GM12878 (cell line): ENCODE measurements at regions of chr7 and their contacts with region 1.

Region 1: GRCh38 chr7:106041140-106041717 is 70.9 kb downstream of the SYPL1 start:
- DNase-seq: no peak
- ATAC-seq: peak; percentile 82
- H3K4me3 ChIP-seq: no peak overlapping the region
- H3K27ac ChIP-seq: no peak overlapping the region
- H3K4me1 ChIP-seq: no peaks in the 10 kb centered on the region
- H3K27me3 ChIP-seq: peaks cover 0 to 6% of the 10 kb centered on the region in 2 experiments; a peak in 2 of 4 replicates
- CTCF ChIP-seq: peak; percentile 56 to 85 (median 82)
- EP300 ChIP-seq: no peak
- POLR2A ChIP-seq: no peak
- RAD21 ChIP-seq: peak; percentile 20; the same call in 1 of the 2 replicates

Region 2: DNA sequence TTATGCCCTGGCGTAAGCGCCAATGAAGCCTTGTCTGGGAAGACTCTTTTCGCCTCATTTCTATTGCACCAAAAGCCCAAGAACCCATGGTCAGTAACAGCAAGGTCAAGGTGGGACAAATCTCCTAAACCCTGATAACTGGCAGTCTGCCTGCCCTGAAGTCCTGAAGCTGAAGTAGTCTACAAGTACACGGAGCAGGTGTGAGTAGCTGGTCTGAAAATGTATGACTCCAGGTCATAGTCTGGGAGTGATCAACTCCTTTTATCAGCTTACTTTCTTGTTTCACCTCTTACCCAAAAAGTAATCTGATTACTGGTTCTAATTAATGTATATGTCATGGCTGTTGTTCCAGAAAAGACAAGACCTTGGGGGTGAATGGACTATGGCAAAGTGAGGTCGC is 352.6 kb before region 1 on chr7:
- CTCF ChIA-PET with region 1: interaction called, 6 read pairs
- POLR2A ChIA-PET with region 1: no interaction called
- RAD21 ChIA-PET with region 1: no interaction called
- SMC1A ChIA-PET with region 1: interaction called, 3 read pairs
- in situ Hi-C with region 1: no loop called
- intact Hi-C with region 1: loop called (anchors 1 kb)
- DNase-seq: no peak
- ATAC-seq: no peak
- H3K4me3 ChIP-seq: no peak overlapping the region
- H3K27ac ChIP-seq: no peak overlapping the region
- H3K4me1 ChIP-seq: no peaks in the 10 kb centered on the region; the same call in 1 of the 2 replicates
- H3K27me3 ChIP-seq: 0 out of 4 replicates have a peak, but pooled peaks cover 0 to 2% of the 10 kb centered on the region in 2 experiments
- CTCF ChIP-seq: no peak
- EP300 ChIP-seq: no peak
- POLR2A ChIP-seq: no peak
- RAD21 ChIP-seq: no peak

Region 3: DNA sequence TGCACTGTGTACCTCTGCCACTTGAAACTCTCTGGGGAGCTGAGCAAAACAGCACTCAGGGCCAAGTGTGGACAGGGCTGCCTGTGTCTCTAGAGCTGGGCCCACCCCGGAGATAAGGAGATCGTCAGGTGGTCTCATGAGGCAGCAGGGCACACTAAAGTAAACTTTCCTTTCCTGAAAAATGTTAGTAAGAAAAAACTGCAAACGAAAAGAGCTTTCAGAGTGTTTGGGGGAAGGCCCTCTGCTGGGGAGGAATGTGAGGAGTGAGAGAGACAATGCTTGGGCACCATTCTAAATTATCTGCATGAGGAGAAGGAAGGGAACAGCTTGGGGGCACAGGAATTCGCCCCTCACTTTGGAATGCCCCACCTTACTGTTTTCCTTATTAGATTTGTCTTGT is 292.5 kb before region 1 on chr7:
- CTCF ChIA-PET with region 1: no interaction called
- POLR2A ChIA-PET with region 1: no interaction called
- RAD21 ChIA-PET with region 1: interaction called, 3 read pairs
- SMC1A ChIA-PET with region 1: interaction called, 4 read pairs
- in situ Hi-C with region 1: loop called (anchors 5 kb)
- intact Hi-C with region 1: no loop called
- DNase-seq: no peak
- ATAC-seq: no peak
- H3K4me3 ChIP-seq: no peak overlapping the region
- H3K27ac ChIP-seq: no peak overlapping the region
- H3K4me1 ChIP-seq: no peaks in the 10 kb centered on the region
- H3K27me3 ChIP-seq: peaks cover 3 to 4% of the 10 kb centered on the region in 2 experiments; a peak in 3 of 4 replicates
- CTCF ChIP-seq: no peak
- EP300 ChIP-seq: no peak
- POLR2A ChIP-seq: no peak
- RAD21 ChIP-seq: no peak

Region 4: DNA sequence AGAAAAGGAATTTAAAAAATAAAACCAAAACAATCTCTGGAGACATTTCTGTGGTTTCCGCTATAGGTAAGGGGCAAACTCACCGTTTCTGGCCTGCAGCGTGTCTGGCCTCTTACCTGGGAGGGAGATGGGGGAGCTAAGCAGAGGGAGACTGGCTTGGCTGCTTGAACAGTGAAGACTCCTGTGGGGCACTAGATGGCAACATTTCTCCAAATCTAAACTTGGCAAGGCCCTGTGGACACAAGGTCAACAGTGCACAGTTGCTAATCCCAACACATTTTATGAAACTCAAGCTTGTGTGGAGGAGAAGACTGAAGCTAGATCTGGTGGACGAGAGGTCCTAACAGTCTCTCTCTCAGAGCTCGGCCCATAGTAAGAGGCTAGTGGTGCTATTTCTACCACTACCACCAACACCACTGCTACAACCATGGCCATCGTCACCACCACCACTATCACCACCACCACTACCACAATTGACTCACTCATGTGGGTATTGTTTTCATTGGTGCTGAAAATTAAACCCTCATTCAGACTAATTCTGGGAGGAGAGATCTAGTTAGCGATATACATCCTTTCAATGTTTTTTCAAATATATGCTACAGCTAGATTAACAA is 106.5 kb before region 1 on chr7:
- CTCF ChIA-PET with region 1: interaction called, 5 read pairs
- POLR2A ChIA-PET with region 1: no interaction called
- RAD21 ChIA-PET with region 1: no interaction called
- SMC1A ChIA-PET with region 1: no interaction called
- in situ Hi-C with region 1: no loop called
- intact Hi-C with region 1: loop called (anchors 1 kb)
- DNase-seq: no peak
- ATAC-seq: peak; percentile 62; the same call in 2 of the 3 replicates
- H3K4me3 ChIP-seq: no peak overlapping the region
- H3K27ac ChIP-seq: no peak overlapping the region
- H3K4me1 ChIP-seq: no peaks in the 10 kb centered on the region
- H3K27me3 ChIP-seq: no peaks in the 10 kb centered on the region; a peak in 1 of 4 replicates
- CTCF ChIP-seq: peak in 2 of 3 experiments; percentile 18 to 19; a peak in 2 of 6 replicates
- EP300 ChIP-seq: no peak
- POLR2A ChIP-seq: no peak
- RAD21 ChIP-seq: no peak

Region 5: DNA sequence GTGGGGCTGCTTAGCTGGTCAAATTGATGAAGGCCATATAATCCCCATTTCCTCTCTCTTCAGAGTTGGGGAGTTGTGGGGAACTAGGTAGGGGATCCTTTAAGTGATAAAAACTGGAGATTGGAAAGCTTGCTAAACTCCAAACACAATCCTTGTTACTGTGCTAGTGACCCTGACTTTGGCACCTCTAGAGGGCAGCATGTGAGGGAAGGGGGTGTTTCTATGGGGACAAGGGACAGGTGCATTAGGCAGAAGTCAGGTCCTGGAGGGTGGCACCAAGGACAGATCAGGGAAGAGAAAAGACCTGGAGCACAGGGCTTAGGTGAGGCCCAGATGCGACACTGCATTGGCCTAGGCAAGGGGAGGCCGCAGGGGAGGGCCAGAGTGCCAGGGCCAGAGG is 11.3 kb before region 1 on chr7:
- CTCF ChIA-PET with region 1: interaction called, 16 read pairs
- POLR2A ChIA-PET with region 1: no interaction called
- RAD21 ChIA-PET with region 1: interaction called, 5 read pairs
- SMC1A ChIA-PET with region 1: interaction called, 9 read pairs
- in situ Hi-C with region 1: no loop called
- intact Hi-C with region 1: no loop called
- DNase-seq: no peak
- ATAC-seq: peak; percentile 39; the same call in 1 of the 3 replicates
- H3K4me3 ChIP-seq: no peak overlapping the region
- H3K27ac ChIP-seq: no peak overlapping the region
- H3K4me1 ChIP-seq: no peaks in the 10 kb centered on the region
- H3K27me3 ChIP-seq: peaks cover 3 to 4% of the 10 kb centered on the region in 2 experiments
- CTCF ChIP-seq: peak in 2 of 3 experiments; percentile 11 to 28; a peak in 2 of 6 replicates
- EP300 ChIP-seq: no peak
- POLR2A ChIP-seq: no peak
- RAD21 ChIP-seq: no peak

Region 6: GRCh38 chr7:106166655-106167342 is 125.6 kb after region 1 on chr7:
- CTCF ChIA-PET with region 1: interaction called, 16 read pairs
- POLR2A ChIA-PET with region 1: no interaction called
- RAD21 ChIA-PET with region 1: interaction called, 11 read pairs
- SMC1A ChIA-PET with region 1: interaction called, 10 read pairs
- in situ Hi-C with region 1: no loop called
- intact Hi-C with region 1: no loop called
- DNase-seq: no peak
- ATAC-seq: peak; percentile 77
- H3K4me3 ChIP-seq: no peak overlapping the region
- H3K27ac ChIP-seq: no peak overlapping the region
- H3K4me1 ChIP-seq: no peaks in the 10 kb centered on the region
- H3K27me3 ChIP-seq: no peaks in the 10 kb centered on the region
- CTCF ChIP-seq: peak; percentile 68 to 77 (median 72); a peak in 5 of 6 replicates
- EP300 ChIP-seq: no peak
- POLR2A ChIP-seq: no peak
- RAD21 ChIP-seq: peak; percentile 85